Activated CD4-positive, alpha-beta T cell treated with anti-CD3 and anti-CD28 coated beads, Interleukin-2, amount 10 ng/mL, durations not matched to agents 24 days and 14 days (primary cell): ENCODE measurements at regions of chr15 and their contacts with region 1.

Region 1: GRCh38 chr15:57561041-57561711 is 30.5 kb upstream of the MYZAP start:
- DNase-seq: peak; percentile 90
- H3K4me3 Mint-ChIP-seq: peak overlapping the region; percentile 28
- H3K27ac Mint-ChIP-seq: peak overlapping the region; percentile 81
- H3K4me1 Mint-ChIP-seq: peaks cover 38% of the 10 kb centered on the region
- H3K27me3 Mint-ChIP-seq: peaks cover 8% of the 10 kb centered on the region

Region 2: GRCh38 chr15:57640935-57641682 is 79.9 kb after region 1 on chr15:
- intact Hi-C with region 1: loop called (anchors 5 kb)
- DNase-seq: peak; percentile 58
- H3K4me3 Mint-ChIP-seq: no peak overlapping the region
- H3K27ac Mint-ChIP-seq: no peak overlapping the region
- H3K4me1 Mint-ChIP-seq: peaks cover 2% of the 10 kb centered on the region
- H3K27me3 Mint-ChIP-seq: no peaks in the 10 kb centered on the region

Region 3: GRCh38 chr15:57706405-57707209 is 145.4 kb after region 1 on chr15 and contains the start of gene POLR2M:
- intact Hi-C with region 1: loop called (anchors 1 kb)
- DNase-seq: peak; percentile 96
- H3K4me3 Mint-ChIP-seq: peak within 1 kb of the TSS; percentile 88
- H3K27ac Mint-ChIP-seq: peak within 1 kb of the TSS; percentile 66
- H3K4me1 Mint-ChIP-seq: peaks cover 58% of the 10 kb centered on the region
- H3K27me3 Mint-ChIP-seq: peaks cover 4% of the 10 kb centered on the region
- total RNA-seq, gene POLR2M: 54.5 and 55.4 TPM in 2 replicates

Region 4: DNA sequence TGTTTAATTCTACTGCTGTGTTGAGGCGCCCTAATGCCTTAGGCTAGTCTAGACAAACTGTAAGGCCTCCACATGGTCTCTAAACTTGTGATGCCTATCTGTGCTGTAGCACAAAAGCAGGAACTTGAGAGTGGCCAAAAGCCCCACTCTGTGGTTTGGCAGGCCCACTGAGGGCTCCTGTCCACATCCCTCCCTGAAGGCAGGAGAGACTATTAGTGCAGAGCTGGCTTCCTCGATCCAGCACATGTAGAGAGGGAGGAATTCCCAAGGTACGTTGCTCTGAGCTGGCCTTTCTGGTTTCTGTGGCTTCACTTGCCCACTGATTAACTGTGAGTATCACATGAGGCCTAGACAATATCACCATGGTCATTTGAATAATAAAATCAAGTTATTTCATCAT is 235.9 kb after region 1 on chr15:
- intact Hi-C with region 1: no loop called
- DNase-seq: no peak
- H3K4me3 Mint-ChIP-seq: no peak overlapping the region
- H3K27ac Mint-ChIP-seq: no peak overlapping the region
- H3K4me1 Mint-ChIP-seq: no peaks in the 10 kb centered on the region
- H3K27me3 Mint-ChIP-seq: peaks cover 23% of the 10 kb centered on the region

Region 5: DNA sequence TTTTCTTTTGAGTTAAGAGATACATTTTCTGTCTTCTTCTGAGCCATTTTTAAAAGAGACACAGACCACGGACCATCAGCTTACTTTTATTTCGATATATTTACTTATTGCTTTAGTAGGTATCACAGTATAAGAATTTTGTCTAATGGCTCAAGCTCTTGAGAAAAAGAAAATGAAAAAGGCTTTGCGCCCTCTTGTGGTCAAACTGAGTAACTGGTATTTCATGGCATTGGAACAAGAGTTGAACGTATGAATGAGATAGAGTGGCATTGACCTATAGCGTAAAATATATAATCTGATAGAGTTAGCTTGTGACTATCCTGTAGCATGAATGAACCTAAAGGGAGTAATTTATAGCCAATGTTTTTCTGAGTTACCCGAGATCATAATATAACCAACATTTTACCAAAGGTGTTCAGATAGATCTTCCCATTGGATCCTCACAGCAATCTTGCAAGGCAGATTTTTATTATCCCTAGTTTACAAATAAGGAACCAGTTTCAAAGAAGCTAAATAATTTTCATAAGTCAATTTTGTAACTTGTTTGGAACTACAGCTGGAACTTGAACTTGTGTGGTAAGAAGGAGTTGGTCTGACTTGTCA is 300.0 kb after region 1 on chr15:
- intact Hi-C with region 1: loop called (anchors 1 kb)
- DNase-seq: peak; percentile 82
- H3K4me3 Mint-ChIP-seq: no peak overlapping the region
- H3K27ac Mint-ChIP-seq: no peak overlapping the region
- H3K4me1 Mint-ChIP-seq: peaks cover 7% of the 10 kb centered on the region
- H3K27me3 Mint-ChIP-seq: peaks cover 31% of the 10 kb centered on the region

Region 6: GRCh38 chr15:58070801-58071418 is 509.7 kb after region 1 on chr15:
- intact Hi-C with region 1: loop called (anchors 10 kb)
- DNase-seq: peak; percentile 83
- H3K4me3 Mint-ChIP-seq: no peak overlapping the region
- H3K27ac Mint-ChIP-seq: no peak overlapping the region
- H3K4me1 Mint-ChIP-seq: peaks cover 4% of the 10 kb centered on the region
- H3K27me3 Mint-ChIP-seq: peaks cover 55% of the 10 kb centered on the region

Region 7: GRCh38 chr15:58182460-58183163 is 621.4 kb after region 1 on chr15:
- intact Hi-C with region 1: loop called (anchors 5 kb)
- DNase-seq: peak; percentile 77
- H3K4me3 Mint-ChIP-seq: no peak overlapping the region
- H3K27ac Mint-ChIP-seq: no peak overlapping the region
- H3K4me1 Mint-ChIP-seq: peaks cover 12% of the 10 kb centered on the region
- H3K27me3 Mint-ChIP-seq: peaks cover 27% of the 10 kb centered on the region